Left ventricle myocardium inferior (tissue), 1 donor: ENCODE measurements at regions of chr15 and their contacts with region 1.

Region 1: DNA sequence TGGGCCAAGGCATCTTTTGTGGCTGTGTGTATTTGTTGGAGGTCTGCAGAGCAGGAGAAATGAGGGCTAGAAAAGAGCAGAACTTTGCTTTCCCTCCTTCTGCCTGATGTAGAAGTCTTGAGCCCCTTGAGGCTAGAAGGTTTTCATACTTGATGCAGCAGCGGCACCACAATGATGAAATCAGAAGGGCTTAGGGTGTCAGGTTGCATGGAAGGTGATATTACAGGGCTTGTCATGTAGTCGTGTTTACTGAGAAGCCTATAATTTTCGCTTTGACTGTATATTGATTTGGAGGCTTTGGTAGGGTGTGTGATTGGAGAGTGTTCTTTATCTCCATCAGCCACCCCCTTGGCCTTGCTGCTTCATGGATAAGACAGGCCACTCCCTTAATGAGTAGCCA is 339.8 kb downstream of the THSD4 start:
- DNase-seq: no peak
- H3K4me3 ChIP-seq: no peak overlapping the region
- H3K27ac ChIP-seq: no peak overlapping the region
- H3K4me1 ChIP-seq: peaks cover 67% of the 10 kb centered on the region
- H3K27me3 ChIP-seq: no peaks in the 10 kb centered on the region
- CTCF ChIP-seq: no peak

Region 2: DNA sequence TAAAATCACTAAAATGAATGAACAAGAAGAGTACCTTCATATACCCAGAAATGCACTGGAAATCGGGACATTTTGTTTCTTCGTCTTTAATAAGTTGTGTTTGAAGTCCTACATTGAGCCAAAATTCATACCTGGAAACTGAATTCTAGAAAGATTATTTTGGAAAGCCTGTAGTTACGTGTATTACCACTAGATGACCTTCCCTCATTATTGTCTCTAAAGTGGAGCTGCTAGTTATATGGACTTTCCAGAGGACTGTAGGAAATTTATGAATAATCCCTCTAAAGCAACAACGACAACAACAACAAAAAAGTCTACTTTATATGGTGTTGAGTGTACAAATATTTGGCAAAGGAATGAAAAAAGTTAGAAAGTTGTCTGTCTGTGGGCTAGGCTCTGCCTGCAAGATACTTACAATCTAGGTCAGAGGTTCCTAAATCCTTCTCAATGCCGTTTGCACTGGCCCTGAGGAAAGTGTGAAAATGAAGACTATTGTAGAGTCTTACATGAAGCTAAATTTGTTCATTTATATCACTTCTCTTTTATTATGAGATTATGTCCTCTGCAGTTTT is 120.5 kb after region 1 on chr15:
- intact Hi-C with region 1: loop called (anchors 10 kb)
- DNase-seq: no peak
- H3K4me3 ChIP-seq: no peak overlapping the region
- H3K27ac ChIP-seq: peak overlapping the region; percentile 1
- H3K4me1 ChIP-seq: peaks cover 20% of the 10 kb centered on the region
- H3K27me3 ChIP-seq: no peaks in the 10 kb centered on the region
- CTCF ChIP-seq: peak; percentile 66